OCI-LY7 (cell line): ENCODE measurements at regions of chr11 and their contacts with region 1.

Region 1: DNA sequence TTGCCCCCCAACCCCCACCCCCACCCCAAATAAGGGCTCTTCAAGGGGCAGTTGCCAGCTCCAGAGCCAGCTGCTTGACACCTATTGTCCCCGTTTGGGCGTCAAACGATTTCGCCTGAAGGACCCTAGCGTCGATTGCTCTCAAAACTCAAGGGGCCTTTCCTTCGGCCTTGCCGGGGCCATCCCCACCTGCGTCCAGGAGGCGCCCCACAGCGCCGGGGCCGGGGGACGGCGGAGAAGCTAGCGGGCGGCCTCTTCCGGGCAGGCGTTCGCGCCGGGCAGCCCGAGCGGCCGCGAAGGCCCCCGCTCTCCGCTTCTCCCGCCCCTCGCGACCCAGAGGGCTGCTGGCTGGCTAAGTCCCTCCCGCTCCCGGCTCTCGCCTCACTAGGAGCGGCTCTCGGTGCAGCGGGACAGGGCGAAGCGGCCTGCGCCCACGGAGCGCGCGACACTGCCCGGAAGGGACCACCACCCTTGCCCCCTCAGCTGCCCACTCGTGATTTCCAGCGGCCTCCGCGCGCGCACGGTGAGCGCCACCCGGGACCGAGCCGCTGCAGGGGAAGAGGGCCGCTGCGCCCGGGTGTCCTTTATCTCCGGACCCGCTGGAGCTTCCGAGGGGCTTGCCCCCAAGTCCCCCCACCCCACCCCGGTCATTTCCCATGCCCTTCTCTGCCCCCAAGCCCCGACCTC is at the start of gene CAPRIN1:
- DNase-seq: peak; percentile 93
- H3K4me3 ChIP-seq: peak within 1 kb of the TSS; percentile 90
- H3K27ac ChIP-seq: peak within 1 kb of the TSS; percentile 90
- H3K4me1 ChIP-seq: peaks cover 42% of the 10 kb centered on the region
- CTCF ChIP-seq: no peak
- total RNA-seq, gene CAPRIN1: 259 and 260 TPM in 2 replicates

Region 2: GRCh38 chr11:32893343-32894148 is 1157.9 kb before region 1 on chr11:
- CTCF ChIA-PET with region 1: no interaction called
- POLR2A ChIA-PET with region 1: no interaction called
- intact Hi-C with region 1: loop called (anchors 10 kb)
- DNase-seq: peak; percentile 80
- H3K4me3 ChIP-seq: peak overlapping the region; percentile 86
- H3K27ac ChIP-seq: peak overlapping the region; percentile 82
- H3K4me1 ChIP-seq: peaks cover 26% of the 10 kb centered on the region
- CTCF ChIP-seq: peak; percentile 80

Region 3: DNA sequence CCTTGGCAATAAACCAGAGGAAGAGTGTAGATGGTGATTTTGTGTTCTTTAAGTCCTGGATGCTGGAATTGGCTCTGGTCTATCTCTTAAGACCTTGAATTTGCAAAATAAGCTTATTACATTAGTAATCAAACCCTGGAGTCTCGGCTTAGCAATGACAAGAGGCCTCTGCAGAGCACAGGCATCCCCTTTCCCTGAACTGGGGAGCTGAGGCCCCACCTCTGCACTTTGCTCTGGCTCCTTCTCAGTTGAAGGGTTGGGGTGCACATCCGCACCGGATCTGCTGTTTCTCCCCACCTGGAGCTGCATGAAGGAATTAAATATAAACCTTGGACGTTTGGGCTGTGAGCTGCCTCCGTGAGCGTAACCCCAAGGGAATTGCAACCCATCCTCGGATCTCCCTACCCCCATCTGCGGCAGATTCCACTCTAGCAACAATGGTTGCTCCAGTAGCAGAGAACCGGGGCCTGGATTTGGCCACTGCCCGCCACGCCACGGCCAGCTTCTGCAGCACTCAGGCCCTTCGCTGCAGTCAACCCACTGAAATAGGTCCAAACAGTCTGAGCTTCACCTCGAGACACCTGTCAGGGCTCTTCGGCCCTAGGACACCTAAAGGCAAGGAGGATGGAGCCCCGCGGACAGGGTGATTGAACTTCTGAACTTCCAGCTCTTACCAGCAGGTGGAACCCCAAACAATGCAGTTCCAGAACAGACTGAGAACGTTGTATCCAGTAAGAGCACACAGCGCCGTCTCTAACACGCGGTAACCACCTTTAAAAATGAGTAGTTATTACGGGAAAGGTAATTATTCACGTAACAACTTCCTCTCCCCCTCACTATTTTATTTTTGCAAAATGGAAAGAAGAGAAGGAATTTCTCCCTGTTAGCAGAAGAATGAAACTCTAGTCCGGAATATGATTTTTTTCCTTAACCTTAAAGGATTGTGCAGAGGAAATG is 54.7 kb before region 1 on chr11:
- CTCF ChIA-PET with region 1: no interaction called
- POLR2A ChIA-PET with region 1: interaction called, 3 read pairs
- intact Hi-C with region 1: loop called (anchors 2 kb)
- DNase-seq: peak; percentile 82
- H3K4me3 ChIP-seq: no peak overlapping the region
- H3K27ac ChIP-seq: no peak overlapping the region
- H3K4me1 ChIP-seq: peaks cover 9% of the 10 kb centered on the region
- CTCF ChIP-seq: peak; percentile 90

Region 4: GRCh38 chr11:34068111-34068510 is 16.6 kb after region 1 on chr11:
- CTCF ChIA-PET with region 1: interaction called, 16 read pairs
- POLR2A ChIA-PET with region 1: interaction called, 20 read pairs
- intact Hi-C with region 1: loop called (anchors 2 kb)
- DNase-seq: no peak
- H3K4me3 ChIP-seq: no peak overlapping the region
- H3K27ac ChIP-seq: peak overlapping the region; percentile 29
- H3K4me1 ChIP-seq: peaks cover 47% of the 10 kb centered on the region
- CTCF ChIP-seq: no peak

Region 5: GRCh38 chr11:34075178-34075820 is 23.8 kb after region 1 on chr11:
- CTCF ChIA-PET with region 1: no interaction called
- POLR2A ChIA-PET with region 1: interaction called, 20 read pairs
- intact Hi-C with region 1: no loop called
- DNase-seq: no peak
- H3K4me3 ChIP-seq: no peak overlapping the region
- H3K27ac ChIP-seq: no peak overlapping the region
- H3K4me1 ChIP-seq: peaks cover 3% of the 10 kb centered on the region
- CTCF ChIP-seq: no peak

Region 6: DNA sequence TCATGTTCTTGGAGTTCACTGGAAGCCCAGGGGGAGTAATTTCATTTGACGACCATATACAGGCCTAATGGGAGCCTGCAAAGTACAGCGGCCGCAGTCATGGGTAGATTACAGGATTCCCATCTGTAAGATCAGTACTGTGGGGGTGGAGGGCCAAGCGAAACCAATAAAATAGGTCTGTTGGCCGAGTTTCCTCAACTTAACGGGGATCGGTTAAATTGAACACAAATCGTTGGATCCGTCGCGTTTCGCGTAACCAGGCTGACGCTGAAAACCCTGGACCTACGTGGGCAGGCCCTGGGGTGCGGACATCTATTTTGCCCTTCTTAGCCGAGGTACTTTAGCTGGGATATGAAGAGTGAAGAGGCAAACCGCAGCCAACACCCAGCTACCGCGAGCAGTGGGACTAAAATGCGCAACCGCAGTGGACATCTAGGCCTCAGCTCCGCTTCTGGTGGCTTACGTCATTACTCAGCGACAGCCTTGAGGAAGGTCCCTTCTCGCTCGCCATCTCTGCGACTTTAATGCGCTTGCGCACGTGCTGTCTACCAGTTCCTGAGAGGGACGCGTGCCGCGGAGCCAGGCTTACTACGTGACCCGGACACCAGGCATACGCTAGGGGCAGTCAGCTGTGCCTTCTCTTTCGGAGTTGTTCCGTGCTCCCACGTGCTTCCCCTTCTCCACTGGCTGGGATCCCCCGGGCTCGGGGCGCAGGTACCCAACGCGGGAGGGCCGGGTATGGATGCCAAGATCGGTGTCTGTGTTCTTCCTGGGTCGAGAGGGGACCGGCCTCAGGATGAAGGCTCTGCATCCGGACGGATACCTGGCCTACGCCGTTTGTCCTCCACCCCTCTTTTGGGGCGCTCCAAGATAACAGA is 53.8 kb after region 1 on chr11 and contains the start of gene NAT10:
- CTCF ChIA-PET with region 1: interaction called, 3 read pairs
- POLR2A ChIA-PET with region 1: interaction called, 6 read pairs
- intact Hi-C with region 1: loop called (anchors 1 kb)
- DNase-seq: peak; percentile 99
- H3K4me3 ChIP-seq: peak within 1 kb of the TSS; percentile 88
- H3K27ac ChIP-seq: peak within 1 kb of the TSS; percentile 86
- H3K4me1 ChIP-seq: peaks cover 47% of the 10 kb centered on the region
- CTCF ChIP-seq: 0 out of 2 replicates have a peak, but pooled peaks have one; percentile 20
- total RNA-seq, gene NAT10: 62.5 and 64.9 TPM in 2 replicates

Region 7: GRCh38 chr11:34149786-34150185 is 98.3 kb after region 1 on chr11:
- CTCF ChIA-PET with region 1: no interaction called
- POLR2A ChIA-PET with region 1: no interaction called
- intact Hi-C with region 1: loop called (anchors 5 kb)
- DNase-seq: no peak
- H3K4me3 ChIP-seq: no peak overlapping the region
- H3K27ac ChIP-seq: no peak overlapping the region
- H3K4me1 ChIP-seq: peaks cover 51% of the 10 kb centered on the region
- CTCF ChIP-seq: peak; percentile 52

Region 8: GRCh38 chr11:34344768-34345539 is 293.5 kb after region 1 on chr11:
- CTCF ChIA-PET with region 1: no interaction called
- POLR2A ChIA-PET with region 1: no interaction called
- intact Hi-C with region 1: no loop called
- DNase-seq: no peak
- H3K4me3 ChIP-seq: no peak overlapping the region
- H3K27ac ChIP-seq: no peak overlapping the region
- H3K4me1 ChIP-seq: no peaks in the 10 kb centered on the region
- CTCF ChIP-seq: no peak

Region 9: GRCh38 chr11:34680918-34681554 is 629.5 kb after region 1 on chr11:
- CTCF ChIA-PET with region 1: no interaction called
- POLR2A ChIA-PET with region 1: no interaction called
- intact Hi-C with region 1: no loop called
- DNase-seq: no peak
- H3K4me3 ChIP-seq: no peak overlapping the region
- H3K27ac ChIP-seq: no peak overlapping the region
- H3K4me1 ChIP-seq: no peaks in the 10 kb centered on the region
- CTCF ChIP-seq: no peak